ENCODE measurements at regions of chr7 and their contacts with region 1.

Region 1: GRCh38 chr7:30800785-30801252 is 29.6 kb downstream of the MINDY4 start:
- DNase-seq: peak; percentile 76
- CTCF ChIP-seq: peak; percentile 69

Region 2: GRCh38 chr7:30630986-30631385 is 169.8 kb before region 1 on chr7:
- CTCF ChIA-PET with region 1: no interaction called
- POLR2A ChIA-PET with region 1: interaction called, 10 read pairs
- DNase-seq: peak; percentile 36
- CTCF ChIP-seq: no peak

Region 3: GRCh38 chr7:30727061-30727945 is 73.5 kb before region 1 on chr7:
- CTCF ChIA-PET with region 1: no interaction called
- POLR2A ChIA-PET with region 1: no interaction called
- DNase-seq: no peak
- CTCF ChIP-seq: no peak

Region 4: GRCh38 chr7:30914596-30914995 is 113.8 kb after region 1 on chr7:
- CTCF ChIA-PET with region 1: no interaction called
- POLR2A ChIA-PET with region 1: no interaction called
- DNase-seq: no peak
- CTCF ChIP-seq: no peak

Region 5: DNA sequence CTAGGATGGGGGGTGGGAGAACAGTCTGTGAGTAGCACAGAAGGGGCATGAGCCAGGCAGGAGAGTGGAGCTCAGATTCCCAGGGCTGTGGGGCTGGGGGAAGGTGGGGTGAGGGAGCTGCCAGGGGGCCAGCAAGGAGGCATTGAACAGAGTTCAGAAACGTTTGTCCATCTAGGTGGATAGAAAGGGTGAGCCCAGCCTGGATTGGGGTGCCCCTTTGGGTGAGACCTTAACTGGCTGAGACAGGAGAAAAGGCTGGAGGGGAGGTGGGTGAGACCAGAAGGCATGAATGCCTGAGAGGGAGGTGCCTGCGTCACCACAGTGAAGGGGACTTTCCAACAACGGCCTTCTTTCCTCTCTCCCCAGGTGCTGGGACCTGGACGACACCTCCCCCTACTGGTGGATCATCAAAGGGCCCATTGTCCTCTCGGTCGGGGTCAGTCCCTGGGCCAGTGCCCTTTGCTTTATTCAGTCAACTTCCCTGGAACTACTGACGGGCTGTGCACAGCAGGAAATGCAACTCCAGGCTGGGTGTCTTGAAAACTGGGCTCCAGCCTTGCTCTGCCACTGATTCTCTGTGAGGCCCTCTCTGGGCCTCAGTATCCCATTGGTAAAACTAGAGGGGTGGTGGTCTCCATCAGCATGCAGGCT is 173.9 kb after region 1 on chr7:
- CTCF ChIA-PET with region 1: interaction called, 19 read pairs
- POLR2A ChIA-PET with region 1: no interaction called
- DNase-seq: peak; percentile 91
- CTCF ChIP-seq: peak; percentile 76

Measured in GM10248 (cell line).